ENCODE measurements at regions of chr1 and their contacts with region 1.

Region 1: GRCh38 chr1:239478069-239478468 is 91.7 kb downstream of the CHRM3 start:
- DNase-seq: no peak

Region 2: DNA sequence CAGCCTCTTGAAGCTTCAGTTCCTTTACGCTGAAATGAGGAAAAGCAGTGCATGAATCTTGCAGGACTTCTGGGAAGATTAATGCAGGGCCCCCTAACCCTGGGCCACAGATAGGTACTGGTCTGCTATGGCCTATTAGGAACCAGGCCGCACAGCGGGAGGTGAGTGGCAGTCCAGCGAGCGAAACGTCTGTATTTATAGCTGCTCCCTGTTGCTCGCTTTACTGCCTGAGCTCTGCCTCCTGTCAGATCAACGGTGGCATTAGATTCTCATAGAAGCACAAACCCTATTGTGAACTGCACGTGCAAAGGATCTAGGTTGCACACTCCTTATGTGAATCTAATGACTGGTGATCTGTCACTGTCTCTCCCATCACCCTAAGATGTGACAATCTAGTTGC is 38.5 kb after region 1 on chr1:
- CTCF ChIA-PET with region 1: interaction called, 10 read pairs
- POLR2A ChIA-PET with region 1: no interaction called
- DNase-seq: no peak